Aorta (tissue), 5 donors: ENCODE measurements at regions of chr9 and their contacts with region 1.

Region 1: GRCh38 chr9:76445976-76446375 is 13.0 kb upstream of the GCNT1 start:
- DNase-seq: no peak
- ATAC-seq: no peak
- H3K4me3 ChIP-seq: no peak overlapping the region
- H3K27ac ChIP-seq: no peak overlapping the region
- H3K4me1 ChIP-seq: no peaks in the 10 kb centered on the region
- H3K27me3 ChIP-seq: no peaks in the 10 kb centered on the region

Region 2: DNA sequence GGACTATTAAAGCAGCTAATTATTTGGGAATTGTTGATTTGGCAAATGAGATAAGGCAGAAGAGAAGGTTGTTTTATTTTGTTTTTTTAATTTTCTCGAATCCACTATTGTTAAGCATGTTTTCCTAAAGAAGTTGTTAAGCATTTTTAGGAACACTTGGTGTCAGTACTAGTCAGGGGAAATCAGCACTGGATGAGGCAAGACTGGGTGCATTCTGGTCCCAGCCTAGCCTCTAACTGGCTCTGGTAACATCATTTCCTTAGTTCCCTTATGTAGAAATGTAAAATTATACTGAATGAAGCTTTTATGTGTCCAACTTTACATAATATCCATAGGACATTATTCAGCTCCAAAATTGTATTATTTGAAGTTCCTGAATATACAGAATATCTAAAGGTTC is 359.4 kb before region 1 on chr9:
- intact Hi-C with region 1: no loop called
- DNase-seq: no peak
- ATAC-seq: no peak
- H3K4me3 ChIP-seq: no peak overlapping the region
- H3K27ac ChIP-seq: no peak overlapping the region
- H3K4me1 ChIP-seq: no peaks in the 10 kb centered on the region
- H3K27me3 ChIP-seq: no peaks in the 10 kb centered on the region

Region 3: GRCh38 chr9:76311586-76311985 is 134.4 kb before region 1 on chr9:
- intact Hi-C with region 1: no loop called
- DNase-seq: no peak
- ATAC-seq: no peak
- H3K4me3 ChIP-seq: no peak overlapping the region
- H3K27ac ChIP-seq: no peak overlapping the region
- H3K4me1 ChIP-seq: no peaks in the 10 kb centered on the region
- H3K27me3 ChIP-seq: no peaks in the 10 kb centered on the region

Region 4: GRCh38 chr9:76530458-76531110 is 84.6 kb after region 1 on chr9:
- intact Hi-C with region 1: no loop called
- DNase-seq: peak in 1 of 2 donors; percentile 58
- ATAC-seq: no peak
- H3K4me3 ChIP-seq: no peak overlapping the region
- H3K27ac ChIP-seq: no peak overlapping the region
- H3K4me1 ChIP-seq: no peaks in the 10 kb centered on the region
- H3K27me3 ChIP-seq: no peaks in the 10 kb centered on the region

Region 5: DNA sequence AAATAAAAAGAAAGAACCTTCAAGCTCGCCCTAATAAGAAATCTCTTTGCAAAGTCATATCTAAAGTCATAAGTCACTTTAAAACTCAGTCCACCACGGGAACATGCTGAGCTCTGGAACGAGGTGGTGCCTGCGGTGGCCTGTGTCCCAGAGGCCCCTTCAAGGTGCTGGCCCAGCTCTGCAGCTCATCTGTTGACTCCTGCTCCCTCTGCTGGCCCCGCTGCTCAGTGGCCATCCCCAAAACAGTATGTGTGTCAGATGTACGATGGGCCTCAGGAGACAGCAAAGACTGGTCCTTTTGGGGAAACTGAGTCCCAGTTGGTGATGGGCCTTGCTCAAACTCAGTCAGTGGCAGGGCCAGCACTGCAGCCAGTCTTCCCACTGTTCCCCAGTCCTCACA is 550.7 kb after region 1 on chr9:
- intact Hi-C with region 1: loop called (anchors 5 kb)
- DNase-seq: peak; percentile 68 to 88
- ATAC-seq: peak; percentile 63
- H3K4me3 ChIP-seq: no peak overlapping the region
- H3K27ac ChIP-seq: no peak overlapping the region
- H3K4me1 ChIP-seq: no peaks in the 10 kb centered on the region
- H3K27me3 ChIP-seq: no peaks in the 10 kb centered on the region